ENCODE measurements at regions of chr4 and their contacts with region 1.

Region 1: DNA sequence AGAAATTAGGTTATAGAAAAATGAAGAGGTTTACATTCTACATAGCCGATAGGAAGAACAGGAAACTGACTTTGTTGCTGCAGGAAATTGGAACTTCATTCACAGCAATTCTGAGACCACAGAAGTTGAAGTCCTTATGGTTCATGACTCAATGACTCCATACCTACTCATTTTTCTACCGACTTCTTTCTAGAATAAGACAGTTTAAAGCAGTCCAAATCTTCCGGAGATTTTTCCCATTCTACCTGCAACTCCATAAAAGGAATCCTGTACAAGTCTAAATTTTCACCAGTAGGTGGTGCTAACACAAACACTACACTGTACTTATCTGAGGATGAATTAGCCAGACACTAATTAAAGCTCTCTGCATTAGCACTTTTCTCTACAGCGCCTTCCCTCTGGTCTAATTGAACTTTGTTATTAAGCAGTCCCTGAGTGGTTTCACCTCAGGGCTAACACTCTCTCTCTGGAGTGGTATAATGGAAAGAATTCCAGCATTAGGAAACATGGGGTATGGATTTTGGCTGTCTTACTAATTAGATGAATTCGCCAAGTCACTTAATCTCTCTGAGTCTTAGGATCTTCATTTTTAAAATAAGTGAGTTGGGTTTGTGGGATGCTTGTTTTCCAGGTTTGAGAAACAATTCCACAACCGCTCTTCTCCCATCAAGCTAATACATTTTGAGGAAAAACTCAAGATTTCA is 167.9 kb downstream of the SMIM20 start:
- DNase-seq: no peak
- ATAC-seq: peak; percentile 77 to 82 (median 80)
- H3K4me3 ChIP-seq: no peak overlapping the region
- H3K27ac ChIP-seq: no peak overlapping the region
- H3K4me1 ChIP-seq: no peaks in the 10 kb centered on the region
- H3K27me3 ChIP-seq: no peaks in the 10 kb centered on the region
- CTCF ChIP-seq: peak; percentile 63 to 80 (median 75)
- POLR2A ChIP-seq: no peak

Region 2: GRCh38 chr4:26311633-26312032 is 229.7 kb after region 1 on chr4:
- intact Hi-C with region 1: loop called in 1 of 2 experiments (anchors 5 kb)
- DNase-seq: no peak
- ATAC-seq: no peak
- H3K4me3 ChIP-seq: no peak overlapping the region
- H3K27ac ChIP-seq: no peak overlapping the region
- H3K4me1 ChIP-seq: no peaks in the 10 kb centered on the region
- H3K27me3 ChIP-seq: no peaks in the 10 kb centered on the region
- CTCF ChIP-seq: no peak
- POLR2A ChIP-seq: no peak

Region 3: GRCh38 chr4:26410385-26411293 is 328.7 kb after region 1 on chr4:
- intact Hi-C with region 1: loop called in 1 of 2 experiments (anchors 10 kb)
- DNase-seq: no peak
- ATAC-seq: peak; percentile 38 to 65 (median 52)
- H3K4me3 ChIP-seq: no peak overlapping the region
- H3K27ac ChIP-seq: no peak overlapping the region
- H3K4me1 ChIP-seq: peaks cover 0 to 13% (median 4%) of the 10 kb centered on the region in 4 donors
- H3K27me3 ChIP-seq: no peaks in the 10 kb centered on the region
- CTCF ChIP-seq: peak; percentile 59 to 72 (median 66)
- POLR2A ChIP-seq: no peak

Measured in right lobe of liver (tissue), 6 donors.